Sigmoid colon (tissue), 7 donors: ENCODE measurements at regions of chr1 and their contacts with region 1.

Region 1: GRCh38 chr1:205591522-205592351 is 40.1 kb downstream of the ELK4 start:
- DNase-seq: peak; percentile 92
- H3K4me3 ChIP-seq: peak overlapping the region; percentile 15 to 50 (median 42)
- H3K27ac ChIP-seq: peak overlapping the region in 1 of 4 donors; percentile 28
- H3K4me1 ChIP-seq: peaks cover 0 to 11% (median 3%) of the 10 kb centered on the region in 4 donors
- H3K27me3 ChIP-seq: no peaks in the 10 kb centered on the region
- CTCF ChIP-seq: peak; percentile 99
- EP300 ChIP-seq: no peak
- POLR2A ChIP-seq: no peak

Region 2: GRCh38 chr1:205711104-205712020 is 119.6 kb after region 1 on chr1:
- intact Hi-C with region 1: loop called (anchors 5 kb)
- DNase-seq: no peak
- H3K4me3 ChIP-seq: no peak overlapping the region
- H3K27ac ChIP-seq: peak overlapping the region in 1 of 4 donors; percentile 8
- H3K4me1 ChIP-seq: peaks cover 0 to 23% (median 10%) of the 10 kb centered on the region in 4 donors
- H3K27me3 ChIP-seq: no peaks in the 10 kb centered on the region
- CTCF ChIP-seq: peak; percentile 41 to 88 (median 79)
- EP300 ChIP-seq: no peak
- POLR2A ChIP-seq: no peak